Left cardiac atrium (tissue), 4 donors: ENCODE measurements at regions of chr1 and their contacts with region 1.

Region 1: DNA sequence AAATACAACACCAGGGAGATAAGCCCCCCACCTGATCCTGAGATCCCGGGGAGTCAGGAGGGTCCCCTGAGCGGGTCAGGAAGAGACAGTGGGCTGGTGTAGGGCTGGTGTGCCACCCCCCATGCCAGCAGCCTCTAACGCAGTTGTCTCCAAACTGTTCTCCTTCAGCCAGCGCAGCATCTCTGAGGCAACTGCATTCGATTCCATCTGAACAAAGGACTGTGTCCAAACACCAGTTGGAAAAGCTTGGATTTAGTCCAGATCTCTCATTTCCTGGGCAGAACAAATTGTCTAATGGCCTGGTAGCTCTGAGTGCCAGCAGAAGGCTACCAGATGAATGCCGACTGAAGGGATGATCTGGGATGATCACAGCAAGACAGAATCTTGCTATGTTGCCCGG is 44.1 kb upstream of the EIF4G3 start:
- DNase-seq: no peak
- ATAC-seq: peak in 1 of 2 donors; percentile 17

Region 2: DNA sequence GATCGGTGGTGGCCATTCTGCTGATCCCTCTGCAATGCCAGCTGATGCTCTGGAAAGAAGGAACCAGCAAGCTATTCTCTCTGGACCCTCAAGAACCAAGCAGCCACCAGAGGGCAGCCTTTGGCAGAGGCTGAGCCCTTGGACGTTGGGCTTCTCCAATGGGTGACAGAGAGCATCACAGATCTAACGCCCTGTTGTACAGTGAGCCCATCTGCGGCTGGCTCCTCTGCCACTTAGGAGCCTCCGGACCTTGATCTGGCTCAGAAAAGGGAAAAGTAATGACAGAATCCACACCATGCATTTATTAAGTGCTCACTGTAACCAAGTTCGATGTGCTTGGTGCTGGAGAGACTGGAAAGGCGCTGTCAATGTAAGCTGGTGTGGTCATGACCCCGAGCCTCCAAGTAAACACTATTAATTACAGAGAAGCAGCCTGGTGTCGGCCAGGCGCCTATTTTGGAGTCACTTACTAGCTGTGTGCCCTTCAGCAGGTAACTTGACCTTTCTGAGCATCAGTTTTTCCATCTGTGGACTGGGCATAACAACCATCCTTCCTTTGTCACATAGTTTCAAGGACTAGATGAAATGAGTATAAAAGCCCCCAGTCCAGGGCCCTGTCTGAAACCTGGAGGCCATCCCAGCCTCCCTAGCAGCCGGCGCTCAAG is 34.6 kb after region 1 on chr1:
- intact Hi-C with region 1: no loop called
- DNase-seq: peak; percentile 93
- ATAC-seq: peak; percentile 82 to 90

Region 3: GRCh38 chr1:21490774-21491553 is 270.1 kb after region 1 on chr1:
- intact Hi-C with region 1: loop called in 1 of 2 experiments (anchors 10 kb)
- DNase-seq: no peak
- ATAC-seq: peak; percentile 41 to 73

Region 4: GRCh38 chr1:21669258-21670058 is 448.6 kb after region 1 on chr1 and contains the start of gene RAP1GAP:
- intact Hi-C with region 1: loop called in 1 of 2 experiments (anchors 10 kb)
- DNase-seq: peak; percentile 38
- ATAC-seq: peak; percentile 20 to 37
- total RNA-seq, gene RAP1GAP: 10.5 to 16.4 TPM